AG04449 (cell line): ENCODE measurements at regions of chr17 and their contacts with region 1.

Region 1: DNA sequence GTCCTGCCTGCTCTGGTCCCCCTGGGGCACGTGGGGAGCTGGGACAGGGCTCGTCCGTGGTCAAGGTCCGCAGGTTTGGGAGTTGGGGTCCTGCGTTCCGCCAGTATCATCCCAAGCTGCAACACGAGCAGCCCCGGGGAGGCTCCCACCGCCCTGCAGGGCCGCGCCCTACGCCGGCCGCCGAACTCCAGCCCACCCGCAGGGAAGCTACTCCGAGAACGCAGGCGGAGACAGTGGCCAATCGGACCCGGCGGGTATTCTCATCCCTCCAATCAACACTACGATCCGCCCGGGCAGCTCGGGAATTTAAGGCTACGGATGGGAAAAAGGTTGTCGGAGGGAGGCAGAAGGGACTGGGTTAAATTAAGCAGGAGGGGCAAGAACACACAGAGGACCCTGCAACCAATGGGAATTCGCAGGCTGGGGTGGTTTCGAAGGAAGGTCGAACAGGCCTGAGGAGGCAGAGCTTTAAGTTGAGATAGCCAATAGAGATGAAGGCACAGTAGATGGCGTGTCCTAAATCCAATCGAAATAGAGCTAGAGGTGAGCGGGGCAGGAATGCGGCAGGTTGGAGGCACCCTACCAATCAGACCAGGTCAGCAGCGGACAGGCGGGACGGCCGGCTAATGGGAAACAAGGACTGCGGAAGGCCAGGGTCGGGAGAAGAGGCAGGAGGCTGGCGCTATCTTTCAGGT is 626 bp downstream of the SPAG7 start:
- DNase-seq: peak; percentile 99
- H3K4me3 ChIP-seq: peak overlapping the region; percentile 81
- CTCF ChIP-seq: no peak

Region 2: GRCh38 chr17:4908301-4908700 is 58.7 kb before region 1 on chr17:
- CTCF ChIA-PET with region 1: interaction called, 19 read pairs
- POLR2A ChIA-PET with region 1: interaction called, 6 read pairs
- DNase-seq: no peak
- H3K4me3 ChIP-seq: no peak overlapping the region
- CTCF ChIP-seq: no peak

Region 3: GRCh38 chr17:4939796-4940624 is 27.0 kb before region 1 on chr17 and contains the starts of genes RNF167 and SLC25A11:
- CTCF ChIA-PET with region 1: interaction called, 4 read pairs
- POLR2A ChIA-PET with region 1: interaction called, 119 read pairs
- DNase-seq: peak; percentile 98
- H3K4me3 ChIP-seq: peak within 1 kb of the TSS; percentile 92
- CTCF ChIP-seq: no peak

Region 4: GRCh38 chr17:4948931-4949320 is 18.1 kb before region 1 on chr17:
- CTCF ChIA-PET with region 1: interaction called, 11 read pairs
- POLR2A ChIA-PET with region 1: interaction called, 119 read pairs
- DNase-seq: peak; percentile 38
- H3K4me3 ChIP-seq: peak overlapping the region; percentile 99
- CTCF ChIP-seq: no peak

Region 5: GRCh38 chr17:4956493-4957061 is 10.4 kb before region 1 on chr17:
- CTCF ChIA-PET with region 1: interaction called, 16 read pairs
- POLR2A ChIA-PET with region 1: interaction called, 112 read pairs
- DNase-seq: no peak
- H3K4me3 ChIP-seq: no peak overlapping the region
- CTCF ChIP-seq: no peak

Region 6: GRCh38 chr17:4980644-4981216 is 13.7 kb after region 1 on chr17:
- CTCF ChIA-PET with region 1: interaction called, 54 read pairs
- POLR2A ChIA-PET with region 1: interaction called, 7 read pairs
- DNase-seq: no peak
- H3K4me3 ChIP-seq: no peak overlapping the region
- CTCF ChIP-seq: peak; percentile 49

Region 7: GRCh38 chr17:4986951-4987766 is 20.2 kb after region 1 on chr17 and contains the start of gene CAMTA2:
- CTCF ChIA-PET with region 1: interaction called, 17 read pairs
- POLR2A ChIA-PET with region 1: interaction called, 7 read pairs
- DNase-seq: no peak
- H3K4me3 ChIP-seq: peak within 1 kb of the TSS; percentile 81
- CTCF ChIP-seq: peak; percentile 76